Right ventricle myocardium inferior (tissue), 1 donor: ENCODE measurements at regions of chr1 and their contacts with region 1.

Region 1: DNA sequence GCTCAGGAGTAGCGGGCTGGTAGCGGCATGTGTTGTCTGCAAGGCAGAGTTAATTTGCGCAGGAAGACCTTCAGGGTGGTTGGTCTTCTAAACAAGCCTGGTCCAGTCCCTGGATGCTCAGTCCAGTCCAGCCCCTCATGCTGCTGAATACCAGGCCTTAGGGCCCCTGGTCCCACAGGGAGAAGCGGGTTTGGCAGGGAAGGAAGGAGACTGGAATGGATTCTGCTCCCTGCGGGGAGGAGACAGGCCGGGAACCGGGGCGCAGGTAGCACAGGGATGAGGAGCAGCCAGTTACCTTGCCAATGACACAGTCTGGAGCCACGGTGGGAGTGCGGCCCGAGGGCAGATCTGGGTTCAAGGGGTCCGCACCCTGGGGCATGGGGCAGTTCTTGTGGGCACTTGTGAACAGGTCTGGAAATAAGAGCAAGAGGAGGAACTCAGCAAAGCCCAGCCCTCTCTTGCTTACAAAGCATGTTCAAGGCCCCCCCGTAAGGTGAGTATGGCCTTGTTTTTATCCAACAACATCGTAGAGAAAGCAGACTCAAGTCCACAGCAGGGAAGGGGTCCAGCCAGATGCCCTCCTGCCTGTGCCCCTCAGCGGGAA is 10.1 kb downstream of the FAM131C start:
- DNase-seq: no peak
- ATAC-seq: no peak

Region 2: GRCh38 chr1:15994590-15995351 is 68.6 kb before region 1 on chr1:
- intact Hi-C with region 1: no loop called
- DNase-seq: peak; percentile 74
- ATAC-seq: peak; percentile 83

Region 3: DNA sequence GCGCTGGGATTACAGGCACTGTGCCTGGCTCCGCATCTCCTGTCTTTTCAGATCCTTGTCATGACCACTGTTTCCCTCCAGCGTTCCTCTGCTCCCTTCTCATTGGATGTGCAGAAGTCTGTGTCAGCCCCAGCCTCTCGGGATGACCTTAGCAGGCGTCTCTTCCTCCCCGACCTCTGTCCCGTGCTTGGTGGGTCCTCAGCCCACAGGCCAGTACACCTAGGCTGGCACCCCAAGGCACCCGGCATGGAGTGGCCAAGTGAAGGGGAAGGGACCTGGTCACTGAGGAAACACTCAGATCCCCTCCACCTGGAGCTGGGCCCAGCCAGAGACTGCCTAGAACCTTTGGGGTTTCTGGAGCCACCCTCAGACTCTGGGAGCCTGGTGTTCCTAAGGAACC is 22.1 kb before region 1 on chr1:
- intact Hi-C with region 1: loop called (anchors 2 kb)
- DNase-seq: no peak
- ATAC-seq: no peak

Region 4: GRCh38 chr1:16206547-16207317 is 143.4 kb after region 1 on chr1:
- intact Hi-C with region 1: no loop called
- DNase-seq: peak; percentile 99
- ATAC-seq: peak; percentile 96